ENCODE measurements at regions of chrX and their contacts with region 1.

Region 1: GRCh38 chrX:104854188-104854587 is 288.2 kb downstream of the IL1RAPL2 start:
- DNase-seq: no peak
- H3K4me3 Mint-ChIP-seq: no peak overlapping the region
- H3K27ac Mint-ChIP-seq: no peak overlapping the region
- H3K4me1 Mint-ChIP-seq: peaks cover 16% of the 10 kb centered on the region
- H3K27me3 Mint-ChIP-seq: peaks cover 11% of the 10 kb centered on the region

Region 2: DNA sequence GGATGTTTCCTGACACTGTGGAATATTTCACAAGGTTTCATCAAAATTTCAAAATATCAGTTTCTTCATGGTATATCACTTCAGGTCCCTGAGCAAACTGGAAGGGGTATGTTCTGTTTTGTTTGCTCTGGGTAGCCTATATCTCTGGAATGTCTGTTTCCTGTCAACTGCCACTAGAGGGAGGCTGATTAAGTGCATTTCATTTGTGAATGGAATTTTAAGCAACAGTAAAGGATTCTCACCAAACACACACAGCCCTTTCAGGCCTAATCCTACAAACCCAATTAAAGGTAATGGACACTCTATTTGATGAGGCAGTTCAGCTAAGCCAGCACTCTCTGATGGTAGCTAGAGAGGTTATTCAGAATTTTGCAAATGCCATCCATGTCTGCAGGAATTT is 59.2 kb after region 1 on chrX:
- CTCF ChIA-PET with region 1: no interaction called
- intact Hi-C with region 1: loop called (anchors 5 kb)
- DNase-seq: no peak
- H3K4me3 Mint-ChIP-seq: no peak overlapping the region
- H3K27ac Mint-ChIP-seq: no peak overlapping the region
- H3K4me1 Mint-ChIP-seq: peaks cover 11% of the 10 kb centered on the region
- H3K27me3 Mint-ChIP-seq: no peaks in the 10 kb centered on the region

Measured in activated naive CD4-positive, alpha-beta T cell treated with anti-CD3 and anti-CD28 coated beads for 36 hours (primary cell).